Aorta (tissue), 5 donors: ENCODE measurements at regions of chr6 and their contacts with region 1.

Region 1: DNA sequence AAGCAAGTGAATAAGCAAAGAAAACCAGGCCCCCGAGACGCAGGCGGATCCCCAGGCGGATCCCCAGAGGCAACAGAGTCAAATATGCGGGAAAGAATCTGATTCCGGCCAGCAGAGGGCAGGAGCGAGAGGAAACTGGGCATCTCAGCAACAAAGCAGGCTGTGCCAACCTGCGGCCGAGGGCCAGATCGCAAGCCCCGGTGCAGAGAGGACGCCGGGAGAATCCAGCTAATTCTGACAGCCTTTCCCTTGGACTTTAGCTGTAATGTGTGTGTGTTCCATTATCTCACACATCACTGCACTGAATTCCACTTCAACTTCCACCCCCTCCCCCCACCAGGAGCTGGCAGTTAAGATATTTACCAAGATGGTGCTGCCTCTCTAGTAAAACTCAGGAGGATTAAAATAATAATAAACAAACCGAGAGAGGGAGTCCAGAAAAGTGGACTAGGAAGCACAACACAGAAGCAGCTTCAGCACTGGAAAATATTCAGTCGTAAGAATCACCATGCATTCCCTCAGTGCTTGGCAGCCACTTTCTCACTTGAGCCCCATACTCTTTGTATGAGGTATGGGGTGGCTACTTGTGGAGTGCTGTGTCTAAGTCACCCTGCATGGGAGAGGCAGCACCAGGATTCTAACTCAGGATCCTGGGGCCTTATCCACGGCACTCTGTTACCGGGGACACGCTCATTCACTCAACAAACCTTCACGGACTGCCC is 66.2 kb upstream of the SNX9 start:
- DNase-seq: peak; percentile 94 to 97
- ATAC-seq: peak; percentile 92
- H3K4me3 ChIP-seq: no peak overlapping the region
- H3K27ac ChIP-seq: peak overlapping the region in 1 of 2 donors; percentile 35
- H3K4me1 ChIP-seq: peaks cover 0 to 2% of the 10 kb centered on the region in 2 donors
- H3K27me3 ChIP-seq: no peaks in the 10 kb centered on the region

Region 2: DNA sequence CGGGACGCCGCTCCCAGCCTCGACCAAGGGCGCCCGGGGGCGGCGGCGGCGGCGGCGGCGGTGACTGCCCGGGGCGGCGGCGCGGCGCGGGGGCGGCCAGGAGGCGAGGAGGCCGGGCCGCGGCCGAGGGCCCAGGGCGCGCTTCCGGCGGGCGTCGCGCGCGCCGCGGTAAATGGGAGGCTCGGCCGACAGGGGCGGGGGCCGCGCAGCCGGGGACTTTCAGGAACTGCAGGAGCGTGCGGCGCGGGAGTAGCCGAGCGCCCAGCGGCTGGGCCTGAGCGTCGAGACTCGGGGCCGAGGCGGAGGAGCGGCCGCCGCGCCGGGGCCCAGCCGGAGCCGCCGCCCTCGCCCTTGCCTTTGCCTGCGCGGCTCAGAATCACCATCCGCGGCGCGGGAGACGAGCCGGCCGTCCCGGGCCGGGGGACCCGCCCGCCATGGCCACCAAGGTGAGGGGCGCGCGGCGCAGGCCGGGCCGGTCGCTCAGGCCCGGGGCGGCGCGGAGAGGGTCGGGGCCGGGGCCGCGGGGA is 66.2 kb after region 1 on chr6 and contains the start of gene SNX9:
- intact Hi-C with region 1: loop called in 1 of 2 experiments (anchors 5 kb)
- DNase-seq: peak; percentile 91 to 93
- ATAC-seq: peak; percentile 88
- H3K4me3 ChIP-seq: peak within 1 kb of the TSS; percentile 87 to 90
- H3K27ac ChIP-seq: peak within 1 kb of the TSS; percentile 94 to 98
- H3K4me1 ChIP-seq: peaks cover 0 to 3% of the 10 kb centered on the region in 2 donors
- H3K27me3 ChIP-seq: no peaks in the 10 kb centered on the region
- total RNA-seq, gene SNX9: 81.5 to 95.5 TPM

Region 3: GRCh38 chr6:157873735-157874344 is 117.0 kb after region 1 on chr6:
- intact Hi-C with region 1: loop called (anchors 2 to 5 kb)
- DNase-seq: peak; percentile 81 to 93
- ATAC-seq: peak; percentile 76
- H3K4me3 ChIP-seq: no peak overlapping the region
- H3K27ac ChIP-seq: no peak overlapping the region
- H3K4me1 ChIP-seq: no peaks in the 10 kb centered on the region
- H3K27me3 ChIP-seq: no peaks in the 10 kb centered on the region

Region 4: GRCh38 chr6:157879873-157880254 is 123.0 kb after region 1 on chr6:
- intact Hi-C with region 1: loop called in 1 of 2 experiments (anchors 5 kb)
- DNase-seq: no peak
- ATAC-seq: no peak
- H3K4me3 ChIP-seq: no peak overlapping the region
- H3K27ac ChIP-seq: no peak overlapping the region
- H3K4me1 ChIP-seq: no peaks in the 10 kb centered on the region
- H3K27me3 ChIP-seq: no peaks in the 10 kb centered on the region